ENCODE measurements at regions of chr3 and their contacts with region 1.

Region 1: DNA sequence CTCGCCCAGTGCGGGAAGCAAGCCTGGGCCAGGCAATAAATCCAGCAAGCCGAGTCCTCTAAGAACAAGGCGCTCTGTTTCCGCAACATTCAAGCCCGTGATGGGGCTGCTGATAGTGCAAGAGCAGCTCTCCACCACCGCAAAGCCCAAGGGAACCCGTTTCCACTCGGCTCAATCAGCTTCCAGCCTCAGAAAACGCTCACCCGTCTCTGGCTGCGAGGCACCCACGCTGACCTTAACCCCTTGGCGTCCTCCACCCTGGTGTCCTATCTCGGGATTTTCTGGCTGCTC is 17.8 kb downstream of the SPATA12 start:
- DNase-seq: peak; percentile 41 to 74 (median 46)
- ATAC-seq: peak; percentile 24 to 61 (median 57)
- H3K4me3 ChIP-seq: peak overlapping the region; percentile 36 to 93 (median 74)
- H3K27ac ChIP-seq: peak overlapping the region in 4 of 12 donors; percentile 30 to 79 (median 43)
- H3K4me1 ChIP-seq: peaks cover 0 to 18% (median 4%) of the 10 kb centered on the region in 12 donors
- H3K27me3 ChIP-seq: peaks cover 0 to 21% (median 0%) of the 10 kb centered on the region in 9 donors
- CTCF ChIP-seq: no peak
- POLR2A ChIP-seq: no peak

Region 2: DNA sequence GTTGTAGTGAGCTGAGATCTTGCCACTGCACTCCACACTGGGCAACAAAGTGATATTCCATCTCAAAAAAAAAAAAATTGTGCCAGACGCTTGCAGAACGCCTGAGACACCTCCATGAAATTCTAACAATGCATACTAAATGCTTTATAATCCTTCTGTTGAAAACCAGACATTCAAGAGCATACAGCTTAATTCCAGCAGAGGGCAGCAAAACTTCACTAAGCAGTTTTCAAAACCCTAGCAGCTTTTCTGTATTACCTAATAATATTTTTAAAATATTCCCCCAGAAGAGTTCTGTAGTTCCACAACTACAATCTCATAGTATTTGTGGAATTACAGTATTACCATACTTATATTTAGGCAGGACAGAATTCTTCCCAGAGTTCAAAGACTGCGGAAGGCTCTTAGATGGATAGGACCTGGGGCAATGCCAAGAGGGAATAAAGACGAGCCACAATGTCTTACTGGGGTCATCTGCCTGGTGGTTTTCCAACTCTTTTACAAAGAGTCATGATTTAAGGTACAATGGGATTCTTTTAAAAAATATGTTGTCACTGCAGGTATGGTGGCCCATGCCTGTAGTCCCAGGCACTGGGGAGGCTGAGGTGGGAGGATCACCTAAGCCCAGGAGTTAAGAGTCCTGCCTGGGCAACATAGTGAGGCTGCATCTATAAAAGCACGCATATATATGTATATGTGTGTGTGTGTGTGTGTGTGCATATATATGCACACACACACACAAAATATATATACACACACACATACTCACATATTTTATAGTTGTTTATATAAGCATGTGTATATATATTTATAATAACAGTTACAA is 375.6 kb before region 1 on chr3:
- intact Hi-C with region 1: loop called in 1 of 10 experiments (anchors 10 kb)
- DNase-seq: peak in 2 of 5 donors; percentile 20 to 39
- ATAC-seq: peak; percentile 60 to 75 (median 64)
- H3K4me3 ChIP-seq: no peak overlapping the region
- H3K27ac ChIP-seq: no peak overlapping the region
- H3K4me1 ChIP-seq: peaks cover 0 to 7% (median 0%) of the 10 kb centered on the region in 12 donors
- H3K27me3 ChIP-seq: no peaks in the 10 kb centered on the region
- CTCF ChIP-seq: peak; percentile 81 to 97 (median 88)
- POLR2A ChIP-seq: no peak

Measured in heart left ventricle (tissue), 16 donors.